Calu3 (cell line): ENCODE measurements at regions of chr3 and their contacts with region 1.

Region 1: GRCh38 chr3:142828703-142829305 is 60.1 kb downstream of the PCOLCE2 start:
- DNase-seq: peak; percentile 95
- H3K4me3 Mint-ChIP-seq: no peak overlapping the region
- H3K27ac Mint-ChIP-seq: no peak overlapping the region
- H3K4me1 Mint-ChIP-seq: no peaks in the 10 kb centered on the region
- H3K27me3 Mint-ChIP-seq: no peaks in the 10 kb centered on the region
- CTCF ChIP-seq: peak; percentile 96

Region 2: DNA sequence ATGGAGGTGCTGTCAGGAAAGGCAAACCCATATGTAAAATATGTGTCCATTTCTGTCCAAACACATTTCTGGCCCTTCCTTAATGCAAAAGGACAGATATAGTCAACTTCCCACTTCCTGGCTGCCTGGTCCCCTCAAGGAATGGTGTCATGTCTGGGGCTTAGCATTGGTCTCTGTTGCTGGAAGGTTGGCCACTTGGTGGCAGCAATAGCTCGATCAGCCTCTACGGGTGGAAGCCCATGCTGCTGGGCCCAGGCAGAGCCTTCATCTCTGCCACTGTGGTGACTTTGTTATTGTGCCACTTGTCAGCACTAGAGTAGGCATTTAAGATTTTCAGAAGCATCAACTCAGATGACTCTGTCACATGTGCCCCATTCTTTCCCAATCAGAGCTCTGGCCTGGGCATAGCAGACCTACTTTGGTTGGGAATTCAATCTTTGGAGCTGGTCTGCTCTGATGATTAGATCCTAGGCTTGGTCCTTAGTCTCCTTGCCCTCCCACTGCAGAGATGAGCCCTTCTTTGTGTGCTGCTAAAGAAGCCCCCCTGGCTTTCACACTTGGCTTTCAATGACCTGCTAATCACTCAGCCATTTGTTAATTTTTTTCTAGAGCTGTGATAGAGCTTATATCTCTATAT is 1828.7 kb before region 1 on chr3:
- CTCF ChIA-PET with region 1: no interaction called
- intact Hi-C with region 1: no loop called
- DNase-seq: peak; percentile 81
- H3K4me3 Mint-ChIP-seq: no peak overlapping the region
- H3K27ac Mint-ChIP-seq: no peak overlapping the region
- H3K4me1 Mint-ChIP-seq: peaks cover 8% of the 10 kb centered on the region
- H3K27me3 Mint-ChIP-seq: peaks cover 5% of the 10 kb centered on the region
- CTCF ChIP-seq: peak; percentile 67

Region 3: DNA sequence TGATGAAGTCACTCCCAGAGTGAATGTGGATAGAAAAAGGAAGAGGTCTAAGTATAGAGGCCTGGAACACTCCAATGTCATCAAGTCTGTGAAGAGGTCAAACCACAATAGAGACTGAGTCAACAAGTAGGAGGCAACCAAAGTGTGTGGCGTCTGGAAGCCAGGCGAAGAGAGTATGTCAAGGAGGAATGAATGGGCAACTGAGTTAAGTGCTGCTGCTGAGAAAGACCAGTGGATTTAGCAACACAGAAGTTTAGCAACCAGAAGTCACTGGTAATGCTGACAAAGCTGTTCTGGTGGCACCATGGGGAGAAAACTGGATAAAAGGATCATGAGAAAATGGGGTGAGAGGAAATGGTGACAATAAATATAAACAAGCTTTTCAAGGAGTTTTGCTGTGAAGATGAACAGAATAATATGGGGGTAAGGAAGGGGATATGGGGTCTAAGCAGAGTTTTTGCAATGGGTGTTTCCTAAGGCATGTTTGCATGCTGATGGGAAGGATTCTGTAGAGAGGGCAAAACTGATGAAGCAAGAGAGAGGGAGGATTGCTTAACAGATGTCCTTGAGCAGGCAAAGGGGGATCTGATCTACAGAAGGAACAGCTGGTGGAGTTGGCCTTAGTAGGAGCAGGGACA is 21.7 kb after region 1 on chr3:
- CTCF ChIA-PET with region 1: interaction called, 12 read pairs
- intact Hi-C with region 1: no loop called
- DNase-seq: peak; percentile 75
- H3K4me3 Mint-ChIP-seq: no peak overlapping the region
- H3K27ac Mint-ChIP-seq: no peak overlapping the region
- H3K4me1 Mint-ChIP-seq: peaks cover 18% of the 10 kb centered on the region
- H3K27me3 Mint-ChIP-seq: no peaks in the 10 kb centered on the region
- CTCF ChIP-seq: no peak

Region 4: GRCh38 chr3:142904639-142905436 is 76.0 kb after region 1 on chr3:
- CTCF ChIA-PET with region 1: interaction called, 64 read pairs
- intact Hi-C with region 1: loop called (anchors 1 kb)
- DNase-seq: peak; percentile 65
- H3K4me3 Mint-ChIP-seq: peak overlapping the region; percentile 25
- H3K27ac Mint-ChIP-seq: peak overlapping the region; percentile 0
- H3K4me1 Mint-ChIP-seq: peaks cover 17% of the 10 kb centered on the region
- H3K27me3 Mint-ChIP-seq: peaks cover 19% of the 10 kb centered on the region
- CTCF ChIP-seq: peak; percentile 63

Region 5: DNA sequence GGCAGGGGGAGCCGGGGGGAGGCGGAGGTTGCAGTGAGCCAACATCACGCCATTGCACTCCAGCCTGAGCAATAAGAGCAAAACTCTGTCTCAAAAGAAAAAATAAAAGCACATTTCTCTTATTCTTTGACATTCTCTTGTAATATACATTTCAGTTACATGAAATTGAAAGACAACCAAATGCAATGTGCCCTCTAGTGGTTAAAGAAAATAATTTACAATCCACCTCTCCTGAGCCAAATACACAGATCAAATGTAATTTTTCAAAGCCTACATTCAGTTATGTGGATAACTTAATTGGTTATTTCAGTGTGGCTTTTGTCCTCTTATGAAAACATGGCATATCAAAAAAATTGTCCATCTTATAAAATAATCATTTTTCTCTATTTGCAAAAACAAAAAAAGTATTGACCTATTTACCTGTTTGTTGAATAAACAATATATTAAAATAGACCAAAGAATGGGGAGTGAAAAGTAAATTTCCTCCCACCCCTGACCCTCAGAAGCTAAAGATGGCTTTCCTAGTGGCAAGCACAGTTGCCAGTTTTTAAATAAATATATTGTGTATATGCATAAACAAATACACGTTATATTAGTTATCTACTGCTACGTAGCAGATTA is 158.4 kb after region 1 on chr3:
- CTCF ChIA-PET with region 1: interaction called, 12 read pairs
- intact Hi-C with region 1: loop called (anchors 1 kb)
- DNase-seq: no peak
- H3K4me3 Mint-ChIP-seq: no peak overlapping the region
- H3K27ac Mint-ChIP-seq: no peak overlapping the region
- H3K4me1 Mint-ChIP-seq: no peaks in the 10 kb centered on the region
- H3K27me3 Mint-ChIP-seq: peaks cover 15% of the 10 kb centered on the region
- CTCF ChIP-seq: peak; percentile 84

Region 6: GRCh38 chr3:143001369-143002082 is 172.7 kb after region 1 on chr3 and contains the start of gene U2SURP:
- CTCF ChIA-PET with region 1: interaction called, 10 read pairs
- intact Hi-C with region 1: no loop called
- DNase-seq: peak; percentile 99
- H3K4me3 Mint-ChIP-seq: peak within 1 kb of the TSS; percentile 94
- H3K27ac Mint-ChIP-seq: peak within 1 kb of the TSS; percentile 96
- H3K4me1 Mint-ChIP-seq: peaks cover 57% of the 10 kb centered on the region
- H3K27me3 Mint-ChIP-seq: no peaks in the 10 kb centered on the region
- CTCF ChIP-seq: no peak
- total RNA-seq, gene U2SURP: 275 TPM in 2 replicates